ENCODE measurements at regions of chr2 and their contacts with region 1.

Region 1: DNA sequence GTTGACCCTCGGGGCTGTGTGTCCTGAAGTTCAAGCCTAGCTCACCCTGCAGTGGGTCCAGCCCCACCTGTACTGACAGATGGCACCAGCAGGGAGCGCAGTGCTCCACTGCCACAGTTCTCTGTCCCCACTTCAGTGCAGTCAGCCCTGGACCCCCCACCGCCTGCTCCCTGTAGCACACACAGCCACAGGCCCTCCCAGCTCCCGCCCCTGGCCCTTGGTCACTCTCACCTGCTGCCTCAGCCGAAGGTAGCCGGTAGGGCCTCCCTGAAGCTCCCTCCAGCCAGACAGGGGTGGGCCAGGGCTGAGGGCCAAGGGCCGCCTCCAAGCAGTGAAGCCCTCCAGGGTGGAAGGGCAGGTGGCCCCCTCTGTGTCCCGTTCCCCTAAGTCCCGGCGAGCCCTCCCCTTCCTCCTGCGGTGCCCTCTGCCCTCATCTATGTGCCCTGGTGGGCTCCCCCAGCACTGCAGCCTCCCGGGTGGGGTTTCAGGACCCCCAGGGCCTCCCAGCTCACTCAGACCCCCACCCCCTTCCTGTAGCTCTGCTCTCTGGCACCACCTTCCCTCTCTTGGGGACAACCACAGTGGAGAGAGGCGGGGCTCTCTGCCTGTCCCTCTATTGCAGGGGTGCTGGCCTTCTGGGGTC is 10.8 kb upstream of the ALPP start:
- DNase-seq: peak; percentile 47

Region 2: DNA sequence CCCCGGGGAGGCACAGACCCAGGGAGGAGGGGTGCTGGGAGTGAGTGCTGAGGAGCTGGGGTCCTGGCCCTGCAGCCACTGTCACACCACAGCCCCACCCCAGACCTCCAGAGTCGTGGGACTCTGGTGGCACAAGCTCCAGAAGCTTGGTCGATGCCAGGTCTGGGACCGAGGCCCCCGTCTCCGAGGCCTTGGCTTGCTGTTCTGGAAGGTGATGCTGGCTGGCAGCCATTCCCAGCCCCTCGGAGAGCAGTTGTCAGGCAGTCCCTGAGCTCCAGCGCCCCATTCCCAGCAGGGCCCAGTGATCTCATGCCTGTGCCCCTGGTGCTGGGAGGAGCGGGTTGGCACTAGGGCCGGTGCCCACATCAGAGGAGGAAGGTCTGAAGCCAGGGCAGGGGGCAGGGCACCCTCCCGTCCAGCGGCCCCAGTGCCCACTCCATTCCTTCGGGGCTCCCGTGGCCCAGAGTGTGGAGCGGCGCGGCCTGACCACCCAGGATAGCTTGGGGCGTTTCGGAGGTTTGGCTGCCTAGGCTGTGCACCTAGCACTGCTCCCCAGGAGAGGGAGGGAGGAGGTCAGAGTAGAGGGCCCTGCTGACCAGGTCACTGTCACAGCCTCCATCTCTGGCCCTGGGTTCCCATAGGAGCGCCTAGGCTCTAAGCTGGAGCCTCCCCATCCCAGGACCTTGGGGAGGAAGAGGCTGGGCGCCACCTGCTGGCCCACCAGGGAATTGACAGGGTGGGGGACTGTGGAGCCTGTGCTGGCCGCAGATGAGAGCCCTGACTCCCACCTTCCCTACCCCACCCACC is 71.4 kb after region 1 on chr2:
- CTCF ChIA-PET with region 1: interaction called, 13 read pairs
- POLR2A ChIA-PET with region 1: no interaction called
- DNase-seq: no peak

Region 3: DNA sequence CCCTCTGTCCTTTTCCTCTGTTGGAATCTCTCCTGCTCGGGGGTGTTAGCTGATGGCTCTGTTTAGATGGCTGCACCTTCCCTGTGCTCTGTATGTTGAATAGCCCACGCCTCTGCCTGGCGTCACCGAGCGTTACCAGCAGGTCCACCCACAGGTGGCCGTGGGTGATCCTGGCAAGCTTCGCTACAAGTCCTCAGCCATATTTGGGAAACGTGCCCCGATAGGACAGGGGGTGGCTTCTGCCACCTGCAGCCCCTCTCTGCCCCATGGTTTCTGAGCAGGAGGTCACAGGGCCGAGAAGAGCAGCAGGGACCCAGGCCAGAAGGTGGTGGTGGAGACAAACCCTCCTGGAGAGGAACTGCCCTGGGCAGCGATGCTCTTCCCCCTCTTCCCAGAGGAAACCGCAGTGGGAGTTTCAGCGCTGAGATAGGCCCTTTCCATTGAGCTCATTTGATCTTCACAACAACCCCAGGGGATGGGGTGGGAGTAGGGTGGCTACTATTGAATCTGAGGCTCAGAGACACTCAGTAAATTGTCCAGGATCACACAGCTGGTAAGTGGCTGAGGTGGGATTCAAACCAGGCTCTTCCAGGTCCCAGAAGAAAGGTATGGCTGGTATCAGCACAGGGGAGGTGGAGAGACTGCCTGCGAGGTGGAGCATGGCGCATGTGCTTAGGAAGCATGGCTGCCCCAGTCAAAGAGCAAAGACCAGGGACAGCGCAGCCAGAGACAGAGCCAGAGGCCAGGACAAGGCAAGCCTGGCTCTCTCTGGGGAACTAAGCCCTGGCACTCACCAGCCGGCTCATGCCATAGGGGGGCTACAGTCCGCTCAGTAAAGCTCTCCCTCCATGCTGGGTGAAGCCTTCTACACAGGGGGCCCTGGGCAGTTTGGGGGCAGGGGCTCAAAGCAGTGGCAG is 630.3 kb after region 1 on chr2:
- CTCF ChIA-PET with region 1: no interaction called
- POLR2A ChIA-PET with region 1: no interaction called
- DNase-seq: no peak

Measured in HEK293T (cell line).